Panc1 (cell line): ENCODE measurements at regions of chr16 and their contacts with region 1.

Region 1: GRCh38 chr16:22624038-22624799 is 113.5 kb downstream of the NPIPB5 start:
- DNase-seq: no peak
- ATAC-seq: no peak
- H3K4me3 ChIP-seq: no peak overlapping the region
- H3K27ac ChIP-seq: no peak overlapping the region
- H3K4me1 ChIP-seq: no peaks in the 10 kb centered on the region
- H3K27me3 ChIP-seq: peaks cover 18% of the 10 kb centered on the region
- CTCF ChIP-seq: no peak

Region 2: DNA sequence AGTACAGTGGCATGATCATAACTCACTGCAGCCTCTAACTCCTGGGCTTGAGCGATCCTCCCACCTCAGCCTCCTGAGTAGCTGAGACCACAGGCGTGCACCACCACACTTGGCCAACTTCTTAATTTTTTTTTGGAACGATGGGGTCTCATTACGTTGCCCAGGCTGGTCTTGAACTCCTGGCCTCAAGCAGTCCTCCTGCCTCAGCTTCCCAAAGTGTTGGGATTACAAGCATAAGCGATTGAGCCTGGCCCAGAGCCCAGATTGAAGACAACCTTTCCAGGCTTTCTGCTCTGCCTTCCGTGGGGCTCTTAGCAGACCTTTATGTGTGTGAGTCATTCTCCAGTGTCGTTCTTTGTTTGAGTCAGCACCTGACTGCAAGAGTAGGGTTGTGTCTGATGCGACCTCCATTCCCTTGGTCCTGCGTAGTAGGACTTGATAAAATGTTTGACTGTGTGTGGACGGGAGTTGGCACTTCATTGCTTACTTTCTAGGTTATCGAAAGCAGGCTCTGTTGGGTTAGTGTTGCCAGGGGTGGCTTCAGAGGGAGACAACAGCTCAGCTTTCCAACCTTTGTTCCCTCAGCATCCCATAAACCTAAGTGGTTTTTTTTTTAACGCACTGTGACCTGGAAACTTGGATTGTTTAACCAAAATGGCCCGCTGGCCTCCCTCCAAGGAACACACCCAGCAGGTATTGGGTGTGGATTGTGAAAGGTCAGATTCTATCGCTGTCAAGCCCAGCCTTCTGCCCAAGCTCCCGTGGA is 391.8 kb before region 1 on chr16:
- CTCF ChIA-PET with region 1: no interaction called
- POLR2A ChIA-PET with region 1: no interaction called
- in situ Hi-C with region 1: no loop called
- intact Hi-C with region 1: no loop called
- DNase-seq: peak; percentile 15
- ATAC-seq: peak; percentile 95
- H3K4me3 ChIP-seq: peak overlapping the region in 1 of 2 experiments; percentile 43; a peak in 2 of 4 replicates
- H3K27ac ChIP-seq: peak overlapping the region; percentile 60; the same call in 1 of the 2 replicates
- H3K4me1 ChIP-seq: peaks cover 8% of the 10 kb centered on the region; the same call in 1 of the 2 replicates
- H3K27me3 ChIP-seq: no peaks in the 10 kb centered on the region
- CTCF ChIP-seq: no peak

Region 3: DNA sequence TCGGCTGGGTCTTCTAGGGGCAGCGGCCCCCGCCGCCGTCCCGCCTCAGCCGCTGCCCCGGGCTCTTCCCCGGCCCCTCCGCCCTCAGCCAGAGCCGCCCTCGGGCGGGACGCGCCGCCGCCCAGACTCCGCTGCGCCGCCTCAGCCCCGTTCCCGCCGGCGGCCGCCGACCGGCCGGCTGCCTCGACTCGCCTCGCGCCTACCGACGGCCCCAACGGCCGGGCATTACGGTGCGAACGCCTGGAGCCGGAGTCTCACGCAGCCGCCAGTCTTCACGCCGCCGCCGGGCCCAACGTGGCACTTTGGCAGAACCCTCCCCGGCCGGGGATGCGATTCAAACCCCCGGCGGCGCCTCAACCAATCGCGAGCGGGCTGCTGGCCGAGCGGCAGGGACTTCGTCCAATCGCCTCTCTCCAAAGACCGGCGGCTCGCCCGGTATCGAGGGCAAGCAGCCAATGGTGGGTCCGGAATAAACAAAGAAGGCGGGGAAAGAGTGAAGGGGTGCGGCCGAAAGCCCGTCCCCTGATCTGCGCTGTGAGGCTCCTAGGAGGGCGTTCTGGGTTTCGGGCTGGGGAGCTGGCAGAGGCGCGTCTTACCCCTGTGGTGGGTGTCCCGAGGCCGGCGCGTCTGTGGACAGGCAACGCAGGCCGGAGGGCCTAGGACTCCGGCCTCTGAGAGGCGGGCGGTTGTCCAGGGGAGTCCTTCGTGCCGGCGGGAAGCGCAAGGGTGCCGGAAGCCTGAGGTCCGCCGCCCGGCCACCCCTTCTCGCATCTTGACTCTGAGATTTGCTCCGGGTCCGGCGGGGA is 249.7 kb before region 1 on chr16 and contains the start of gene CDR2:
- CTCF ChIA-PET with region 1: no interaction called
- POLR2A ChIA-PET with region 1: no interaction called
- in situ Hi-C with region 1: no loop called
- intact Hi-C with region 1: no loop called
- DNase-seq: peak; percentile 73
- ATAC-seq: peak; percentile 97
- H3K4me3 ChIP-seq: peak within 1 kb of the TSS; percentile 62 to 84
- H3K27ac ChIP-seq: peak within 1 kb of the TSS; percentile 87
- H3K4me1 ChIP-seq: peaks cover 32% of the 10 kb centered on the region
- H3K27me3 ChIP-seq: no peaks in the 10 kb centered on the region
- CTCF ChIP-seq: no peak
- total RNA-seq, gene CDR2: 35.7 TPM

Region 4: DNA sequence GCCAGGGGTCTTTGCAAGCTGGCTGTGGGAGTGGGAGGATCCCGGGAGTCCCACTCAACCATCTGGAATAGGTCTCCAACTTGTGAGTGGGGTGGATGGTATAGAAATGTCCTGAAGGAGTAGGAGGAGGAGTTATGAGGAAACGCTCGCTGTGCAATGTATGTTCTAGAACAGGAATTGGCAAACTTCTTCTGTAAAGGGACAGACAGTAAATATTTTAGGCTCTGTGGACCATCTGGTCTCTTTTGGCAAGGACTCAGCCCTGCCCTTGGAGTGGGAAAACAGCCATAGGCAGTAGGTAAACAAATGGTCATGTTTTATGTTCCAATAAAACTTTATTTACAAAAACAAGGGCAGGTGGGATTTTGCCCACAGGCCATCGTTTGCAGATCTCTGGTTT is 35.7 kb after region 1 on chr16:
- CTCF ChIA-PET with region 1: no interaction called
- POLR2A ChIA-PET with region 1: no interaction called
- in situ Hi-C with region 1: no loop called
- intact Hi-C with region 1: loop called (anchors 2 kb)
- DNase-seq: no peak
- ATAC-seq: no peak
- H3K4me3 ChIP-seq: no peak overlapping the region
- H3K27ac ChIP-seq: no peak overlapping the region
- H3K4me1 ChIP-seq: no peaks in the 10 kb centered on the region
- H3K27me3 ChIP-seq: peaks cover 21% of the 10 kb centered on the region
- CTCF ChIP-seq: no peak

Region 5: GRCh38 chr16:22705799-22706198 is 81.6 kb after region 1 on chr16:
- CTCF ChIA-PET with region 1: no interaction called
- POLR2A ChIA-PET with region 1: no interaction called
- in situ Hi-C with region 1: no loop called
- intact Hi-C with region 1: no loop called
- DNase-seq: no peak
- ATAC-seq: no peak
- H3K4me3 ChIP-seq: no peak overlapping the region
- H3K27ac ChIP-seq: no peak overlapping the region
- H3K4me1 ChIP-seq: no peaks in the 10 kb centered on the region
- H3K27me3 ChIP-seq: peaks cover 5% of the 10 kb centered on the region
- CTCF ChIP-seq: no peak